Caco-2 (cell line): ENCODE measurements at regions of chr1 and their contacts with region 1.

Region 1: DNA sequence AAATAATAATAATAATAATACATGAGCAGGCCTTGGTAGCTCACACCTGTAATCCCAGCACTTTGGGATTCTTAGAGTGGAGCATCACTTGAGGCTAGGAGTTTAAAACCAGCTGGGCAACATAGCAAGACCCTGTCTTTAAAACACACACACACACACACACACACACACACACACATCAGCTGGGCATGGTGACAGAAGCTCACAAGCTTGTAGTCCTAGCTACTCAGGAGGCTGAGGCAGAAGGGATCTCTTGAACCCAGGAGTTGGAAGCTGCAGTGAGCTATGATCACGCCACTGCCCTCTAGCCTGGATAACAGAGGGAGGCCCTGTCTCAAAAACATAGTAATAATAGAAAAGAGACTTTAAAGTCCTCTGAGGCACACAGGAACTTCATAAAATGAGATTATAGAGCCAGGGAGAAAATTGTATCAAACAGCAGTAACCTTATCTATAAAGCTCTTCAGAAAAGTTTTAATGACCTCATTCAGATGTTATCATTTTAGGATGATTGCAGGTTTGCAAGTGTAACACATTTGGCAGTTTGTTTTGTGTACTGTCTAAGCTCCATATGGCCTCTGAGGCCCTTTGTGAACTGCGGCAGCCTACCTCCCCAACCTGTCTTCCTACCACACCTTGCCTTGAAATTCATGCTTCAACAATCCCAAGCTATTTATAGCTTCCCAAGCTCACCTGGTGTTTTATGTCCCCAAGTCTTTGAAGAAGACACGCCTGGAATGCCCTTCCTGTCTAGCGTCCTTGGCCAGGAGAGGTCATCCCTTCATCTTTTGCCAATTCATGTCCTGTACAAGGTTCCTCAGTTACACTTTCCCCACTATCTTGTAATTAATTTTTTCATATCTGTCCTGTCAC is 8.4 kb upstream of the AKNAD1 start:
- DNase-seq: peak; percentile 67 to 80
- H3K4me3 ChIP-seq: no peak overlapping the region
- H3K4me3 Mint-ChIP-seq: peak overlapping the region; percentile 11
- H3K27ac Mint-ChIP-seq: peak overlapping the region; percentile 69
- H3K4me1 ChIP-seq: peaks cover 21% of the 10 kb centered on the region
- H3K4me1 Mint-ChIP-seq: peaks cover 11% of the 10 kb centered on the region
- H3K27me3 ChIP-seq: no peaks in the 10 kb centered on the region
- H3K27me3 Mint-ChIP-seq: no peaks in the 10 kb centered on the region
- CTCF ChIP-seq: no peak

Region 2: GRCh38 chr1:108877348-108878159 is 12.3 kb after region 1 on chr1:
- CTCF ChIA-PET with region 1: no interaction called
- POLR2A ChIA-PET with region 1: interaction called, 4 read pairs
- intact Hi-C with region 1: loop called (anchors 1 kb)
- DNase-seq: no peak
- H3K4me3 ChIP-seq: peak overlapping the region; percentile 68
- H3K4me3 Mint-ChIP-seq: peak overlapping the region; percentile 77
- H3K27ac Mint-ChIP-seq: peak overlapping the region; percentile 50
- H3K4me1 ChIP-seq: peaks cover 5% of the 10 kb centered on the region; the same call in 1 of the 2 replicates
- H3K4me1 Mint-ChIP-seq: no peaks in the 10 kb centered on the region
- H3K27me3 ChIP-seq: no peaks in the 10 kb centered on the region
- H3K27me3 Mint-ChIP-seq: no peaks in the 10 kb centered on the region
- CTCF ChIP-seq: no peak

Region 3: DNA sequence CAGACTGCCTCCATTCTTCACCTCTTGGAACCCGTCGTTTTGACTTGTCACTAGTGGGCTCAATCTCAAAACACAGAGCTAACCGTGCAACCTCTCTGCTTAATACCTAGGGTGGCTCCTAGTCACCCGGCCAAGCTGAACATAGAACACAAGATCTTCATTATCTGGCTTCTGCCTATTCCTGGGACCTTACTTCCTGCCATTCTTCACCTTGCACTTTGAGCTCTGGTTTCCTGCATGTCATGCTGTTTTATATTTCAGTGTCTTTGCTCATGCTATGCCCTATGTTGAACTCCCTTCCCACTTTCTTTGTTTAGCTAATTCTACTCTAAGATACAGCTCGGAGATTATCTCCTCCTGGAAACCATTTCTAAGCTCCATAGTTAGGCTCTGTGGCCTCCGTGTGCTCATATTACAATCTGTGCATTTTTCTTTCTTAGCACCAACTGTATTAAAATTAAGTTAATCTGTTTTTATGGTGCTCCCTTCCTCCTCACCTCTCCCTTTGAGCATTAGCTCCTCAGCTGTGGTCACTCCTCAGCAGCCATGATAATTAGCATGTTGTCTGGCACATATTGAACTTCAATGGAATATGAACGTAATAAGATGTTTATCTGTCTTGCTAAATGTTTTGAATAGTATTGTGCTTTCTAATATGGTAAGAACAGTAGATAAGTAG is 24.6 kb after region 1 on chr1:
- CTCF ChIA-PET with region 1: no interaction called
- POLR2A ChIA-PET with region 1: no interaction called
- intact Hi-C with region 1: no loop called
- DNase-seq: no peak
- H3K4me3 ChIP-seq: no peak overlapping the region
- H3K4me3 Mint-ChIP-seq: no peak overlapping the region
- H3K27ac Mint-ChIP-seq: no peak overlapping the region
- H3K4me1 ChIP-seq: peaks cover 10% of the 10 kb centered on the region; the same call in 1 of the 2 replicates
- H3K4me1 Mint-ChIP-seq: no peaks in the 10 kb centered on the region
- H3K27me3 ChIP-seq: no peaks in the 10 kb centered on the region
- H3K27me3 Mint-ChIP-seq: no peaks in the 10 kb centered on the region
- CTCF ChIP-seq: no peak